ENCODE measurements at regions of chr12 and their contacts with region 1.

Region 1: GRCh38 chr12:15276088-15276698 is 46.1 kb upstream of the PTPRO start:
- DNase-seq: no peak
- ATAC-seq: peak; percentile 58
- H3K4me3 ChIP-seq: no peak overlapping the region
- H3K27ac ChIP-seq: peak overlapping the region in 1 of 2 donors; percentile 33
- H3K4me1 ChIP-seq: peaks cover 3% of the 10 kb centered on the region in 2 donors
- H3K27me3 ChIP-seq: no peaks in the 10 kb centered on the region

Region 2: DNA sequence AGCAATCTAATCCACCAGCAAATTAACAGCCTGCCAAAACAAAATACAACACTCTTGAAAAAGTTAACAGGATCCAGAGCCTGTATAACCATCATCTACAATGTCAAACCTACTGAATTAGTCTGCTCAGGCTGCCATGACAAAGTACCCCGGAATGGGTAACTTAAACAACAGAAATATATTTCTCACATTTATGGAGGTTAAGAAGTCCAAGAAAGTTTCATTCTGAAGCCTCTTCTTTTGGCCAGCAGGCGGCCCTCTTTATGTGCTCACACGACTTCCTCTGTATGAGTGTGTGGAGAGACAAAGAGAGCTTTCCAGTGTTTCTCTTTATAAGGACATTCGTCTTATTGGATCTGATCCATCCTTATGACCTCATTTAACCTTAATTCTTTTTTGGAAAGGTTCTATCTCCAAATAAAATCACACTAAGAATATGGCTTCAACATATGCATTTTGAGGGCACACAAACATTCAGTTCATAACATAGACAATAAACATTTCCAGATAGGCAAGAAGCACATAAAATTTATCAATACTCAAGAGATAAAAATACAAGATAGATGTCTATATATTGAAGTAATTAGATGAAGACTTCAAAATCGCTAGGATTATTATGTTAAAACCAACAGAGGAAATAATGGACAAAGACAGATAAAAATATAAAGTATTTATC is 49.1 kb before region 1 on chr12:
- intact Hi-C with region 1: loop called in 1 of 2 experiments (anchors 5 kb)
- DNase-seq: peak; percentile 71 to 80
- ATAC-seq: peak; percentile 70
- H3K4me3 ChIP-seq: no peak overlapping the region
- H3K27ac ChIP-seq: no peak overlapping the region
- H3K4me1 ChIP-seq: peaks cover 0 to 4% of the 10 kb centered on the region in 2 donors
- H3K27me3 ChIP-seq: no peaks in the 10 kb centered on the region

Region 3: GRCh38 chr12:15584366-15585041 is 308.3 kb after region 1 on chr12:
- intact Hi-C with region 1: loop called (anchors 5 kb)
- DNase-seq: no peak
- ATAC-seq: peak; percentile 55
- H3K4me3 ChIP-seq: no peak overlapping the region
- H3K27ac ChIP-seq: no peak overlapping the region
- H3K4me1 ChIP-seq: no peaks in the 10 kb centered on the region
- H3K27me3 ChIP-seq: no peaks in the 10 kb centered on the region

Measured in aorta (tissue), 5 donors.